ENCODE measurements at regions of chr2 and their contacts with region 1.

Region 1: GRCh38 chr2:59176737-59177136 is 935.6 kb upstream of the FANCL start:
- DNase-seq: no peak
- H3K4me3 Mint-ChIP-seq: no peak overlapping the region
- H3K27ac Mint-ChIP-seq: no peak overlapping the region
- H3K4me1 Mint-ChIP-seq: no peaks in the 10 kb centered on the region
- H3K27me3 Mint-ChIP-seq: peaks cover 34% of the 10 kb centered on the region
- CTCF ChIP-seq: no peak

Region 2: DNA sequence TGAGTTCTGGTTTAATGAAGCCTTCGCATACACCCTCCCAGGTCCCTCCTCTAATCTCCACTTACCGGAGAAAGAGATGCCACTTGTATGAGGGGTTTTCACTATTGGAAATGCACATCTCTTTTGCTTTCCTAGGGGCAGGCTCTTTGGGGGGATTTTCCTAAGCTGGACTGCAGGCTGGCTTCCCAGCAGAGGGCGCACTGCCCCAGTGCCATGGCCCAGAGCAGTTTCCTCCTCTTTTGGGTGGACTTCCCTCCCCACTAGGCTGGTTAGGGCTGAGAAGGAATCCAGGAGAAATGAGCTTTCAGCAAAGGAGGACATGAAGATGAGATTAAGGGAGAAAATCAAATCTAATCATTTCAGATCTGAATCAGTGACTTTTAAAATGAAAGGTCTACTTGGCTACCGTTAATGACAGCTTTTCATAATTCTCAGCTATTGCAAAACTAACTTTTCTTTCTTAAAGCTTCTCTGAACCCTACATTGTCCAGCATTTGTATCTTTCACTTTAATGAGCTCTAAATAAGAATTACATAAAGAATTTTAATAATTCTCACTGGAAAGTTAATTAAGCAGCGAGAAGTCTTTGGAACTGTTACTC is 151.5 kb before region 1 on chr2:
- CTCF ChIA-PET with region 1: no interaction called
- intact Hi-C with region 1: loop called (anchors 5 kb)
- DNase-seq: peak; percentile 52
- H3K4me3 Mint-ChIP-seq: no peak overlapping the region
- H3K27ac Mint-ChIP-seq: no peak overlapping the region
- H3K4me1 Mint-ChIP-seq: no peaks in the 10 kb centered on the region
- H3K27me3 Mint-ChIP-seq: peaks cover 21% of the 10 kb centered on the region
- CTCF ChIP-seq: peak; percentile 74

Region 3: DNA sequence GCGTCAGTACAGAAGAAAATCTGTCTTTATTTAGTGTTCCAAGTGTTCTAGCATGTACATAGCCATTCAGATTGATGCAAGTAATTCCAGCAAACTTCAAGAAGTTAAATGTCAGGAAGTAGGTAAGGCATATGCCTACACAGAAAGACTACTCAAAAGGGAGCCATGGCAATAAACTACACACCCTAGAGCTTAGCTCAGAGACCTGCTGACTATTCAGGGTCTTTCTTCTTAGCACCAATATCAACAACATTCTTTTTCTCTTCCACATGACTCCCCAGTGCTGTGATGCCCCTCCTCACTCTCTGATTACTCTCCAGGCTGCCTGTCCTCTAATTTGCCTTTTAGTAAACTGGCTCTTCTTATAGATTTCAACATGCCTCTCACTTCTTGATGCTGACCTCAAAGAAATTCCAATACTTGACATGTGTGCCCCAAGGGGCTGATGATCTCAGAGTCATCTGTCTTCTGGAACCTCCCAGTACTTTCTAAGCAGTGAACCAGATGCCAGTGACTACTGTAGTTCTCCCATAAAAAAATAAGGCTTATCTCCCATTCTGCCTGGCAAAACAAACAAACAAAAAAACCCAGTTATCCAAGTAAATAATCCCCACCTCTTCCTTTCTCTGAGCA is 26.4 kb before region 1 on chr2:
- CTCF ChIA-PET with region 1: no interaction called
- intact Hi-C with region 1: no loop called
- DNase-seq: no peak
- H3K4me3 Mint-ChIP-seq: no peak overlapping the region
- H3K27ac Mint-ChIP-seq: no peak overlapping the region
- H3K4me1 Mint-ChIP-seq: no peaks in the 10 kb centered on the region
- H3K27me3 Mint-ChIP-seq: no peaks in the 10 kb centered on the region
- CTCF ChIP-seq: no peak